ENCODE measurements at regions of chr11 and their contacts with region 1.

Region 1: GRCh38 chr11:2186669-2187279 is 15.2 kb upstream of the TH start:
- DNase-seq: peak; percentile 76
- ATAC-seq: peak; percentile 72 to 92
- H3K4me3 ChIP-seq: no peak overlapping the region
- H3K27ac ChIP-seq: peak overlapping the region in 1 of 2 experiments; percentile 69; a peak in 2 of 6 replicates
- H3K4me1 ChIP-seq: no peaks in the 10 kb centered on the region
- CTCF ChIP-seq: peak; percentile 56
- EP300 ChIP-seq: no peak
- POLR2A ChIP-seq: no peak
- RAD21 ChIP-seq: peak; percentile 58 to 63; a peak in 4 of 5 replicates

Region 2: DNA sequence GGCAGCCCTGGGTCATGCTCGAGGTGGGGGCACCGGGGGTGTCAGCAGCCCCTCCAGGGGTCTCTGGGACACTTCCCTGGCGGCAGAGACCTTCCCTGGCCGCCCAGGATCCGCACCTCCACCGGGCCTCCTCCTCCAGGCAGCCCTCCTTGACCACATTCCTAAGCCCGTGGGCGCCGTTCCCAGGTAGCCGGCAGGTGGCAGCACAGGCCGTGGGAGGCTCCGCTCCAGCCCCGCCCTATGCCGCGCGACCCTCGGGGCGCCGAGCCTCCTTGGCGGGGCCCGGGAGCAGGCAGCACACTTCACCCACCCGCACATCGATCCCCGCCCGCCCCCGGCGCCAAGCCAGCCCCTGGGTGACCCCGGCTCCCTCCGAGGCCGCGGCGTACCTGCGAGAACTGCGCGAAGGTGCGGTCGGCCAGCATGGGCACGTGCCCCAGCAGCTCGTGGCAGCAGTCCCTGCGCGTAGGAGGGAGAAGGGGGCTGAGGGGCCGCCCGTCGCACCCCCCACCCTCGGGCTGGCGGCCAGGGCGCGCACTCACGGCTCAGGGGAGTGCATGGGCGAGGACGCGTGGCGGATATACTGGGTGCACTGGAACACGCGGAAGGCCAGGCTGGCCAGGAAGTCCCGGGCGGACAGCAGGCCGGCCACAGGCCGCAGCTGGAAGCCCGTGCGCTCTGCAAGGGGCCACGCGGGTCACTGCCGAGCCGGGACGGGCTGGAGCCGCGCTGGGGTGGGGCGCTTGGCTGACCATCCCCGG is 20.5 kb before region 1 on chr11:
- CTCF ChIA-PET with region 1: interaction called, 20 read pairs
- POLR2A ChIA-PET with region 1: no interaction called
- DNase-seq: peak in 1 of 2 experiments; percentile 42
- ATAC-seq: peak; percentile 25 to 80; a peak in 3 of 6 replicates
- H3K4me3 ChIP-seq: no peak overlapping the region
- H3K27ac ChIP-seq: no peak overlapping the region
- H3K4me1 ChIP-seq: no peaks in the 10 kb centered on the region
- CTCF ChIP-seq: peak; percentile 65
- EP300 ChIP-seq: no peak
- POLR2A ChIP-seq: no peak
- RAD21 ChIP-seq: peak; percentile 43 to 51

Region 3: DNA sequence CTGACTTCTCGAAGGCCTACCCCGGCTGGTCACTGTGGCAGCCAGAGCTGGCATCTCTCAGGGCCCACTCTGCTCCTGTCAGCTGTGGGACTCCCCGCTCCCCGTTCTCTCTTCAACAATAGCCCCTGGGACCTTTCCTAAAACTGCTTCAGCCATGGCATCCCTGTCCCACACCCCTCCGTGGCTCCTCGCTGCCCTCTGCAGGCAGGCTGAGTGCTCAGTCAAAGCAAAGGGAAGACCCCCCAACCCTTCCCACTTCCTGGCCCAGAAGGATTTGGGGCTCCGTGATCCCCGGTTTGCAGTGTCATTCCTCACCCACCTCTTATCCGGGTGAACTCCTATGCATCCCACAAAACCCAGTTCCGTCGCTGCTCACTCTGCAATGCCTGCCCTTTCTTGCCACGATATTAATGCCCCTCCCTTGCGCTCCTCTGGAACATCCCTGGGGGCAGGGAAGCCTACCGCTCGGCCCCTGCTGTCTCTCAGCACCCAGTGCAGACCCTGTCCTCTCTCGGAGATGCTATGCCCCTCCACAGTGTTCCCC is 13.6 kb before region 1 on chr11:
- CTCF ChIA-PET with region 1: interaction called, 20 read pairs
- POLR2A ChIA-PET with region 1: no interaction called
- DNase-seq: no peak
- ATAC-seq: peak in 1 of 2 experiments; percentile 68; a peak in 3 of 6 replicates
- H3K4me3 ChIP-seq: no peak overlapping the region
- H3K27ac ChIP-seq: no peak overlapping the region
- H3K4me1 ChIP-seq: 0 out of 3 replicates have a peak, but pooled peaks cover 3% of the 10 kb centered on the region
- CTCF ChIP-seq: peak; percentile 37; the same call in 2 of the 3 replicates
- EP300 ChIP-seq: no peak
- POLR2A ChIP-seq: no peak
- RAD21 ChIP-seq: no peak

Region 4: DNA sequence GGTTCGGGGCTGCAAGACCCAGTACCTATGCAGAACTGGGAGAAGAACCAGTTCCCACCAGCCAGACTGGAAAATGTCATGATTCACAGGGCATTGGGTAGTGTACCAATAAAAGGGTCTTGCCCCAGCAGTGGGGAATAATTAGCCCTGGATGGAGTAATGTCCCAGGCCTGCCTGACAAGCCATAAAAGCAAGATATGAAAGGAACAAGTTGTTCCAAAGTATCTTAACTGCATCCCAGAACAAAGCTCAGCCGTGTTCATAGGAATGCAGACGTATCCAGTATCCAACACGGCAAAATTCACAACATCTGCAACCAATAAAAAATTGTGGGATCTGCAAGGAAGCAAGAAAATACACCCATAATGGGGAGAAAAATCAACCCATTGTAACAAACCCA is 35.7 kb after region 1 on chr11:
- CTCF ChIA-PET with region 1: no interaction called
- POLR2A ChIA-PET with region 1: no interaction called
- DNase-seq: no peak
- ATAC-seq: no peak
- H3K4me3 ChIP-seq: no peak overlapping the region
- H3K27ac ChIP-seq: no peak overlapping the region
- H3K4me1 ChIP-seq: no peaks in the 10 kb centered on the region
- CTCF ChIP-seq: no peak
- EP300 ChIP-seq: no peak
- POLR2A ChIP-seq: no peak
- RAD21 ChIP-seq: no peak